CD8-positive, alpha-beta T cell (primary cell): ENCODE measurements at regions of chr11 and their contacts with region 1.

Region 1: DNA sequence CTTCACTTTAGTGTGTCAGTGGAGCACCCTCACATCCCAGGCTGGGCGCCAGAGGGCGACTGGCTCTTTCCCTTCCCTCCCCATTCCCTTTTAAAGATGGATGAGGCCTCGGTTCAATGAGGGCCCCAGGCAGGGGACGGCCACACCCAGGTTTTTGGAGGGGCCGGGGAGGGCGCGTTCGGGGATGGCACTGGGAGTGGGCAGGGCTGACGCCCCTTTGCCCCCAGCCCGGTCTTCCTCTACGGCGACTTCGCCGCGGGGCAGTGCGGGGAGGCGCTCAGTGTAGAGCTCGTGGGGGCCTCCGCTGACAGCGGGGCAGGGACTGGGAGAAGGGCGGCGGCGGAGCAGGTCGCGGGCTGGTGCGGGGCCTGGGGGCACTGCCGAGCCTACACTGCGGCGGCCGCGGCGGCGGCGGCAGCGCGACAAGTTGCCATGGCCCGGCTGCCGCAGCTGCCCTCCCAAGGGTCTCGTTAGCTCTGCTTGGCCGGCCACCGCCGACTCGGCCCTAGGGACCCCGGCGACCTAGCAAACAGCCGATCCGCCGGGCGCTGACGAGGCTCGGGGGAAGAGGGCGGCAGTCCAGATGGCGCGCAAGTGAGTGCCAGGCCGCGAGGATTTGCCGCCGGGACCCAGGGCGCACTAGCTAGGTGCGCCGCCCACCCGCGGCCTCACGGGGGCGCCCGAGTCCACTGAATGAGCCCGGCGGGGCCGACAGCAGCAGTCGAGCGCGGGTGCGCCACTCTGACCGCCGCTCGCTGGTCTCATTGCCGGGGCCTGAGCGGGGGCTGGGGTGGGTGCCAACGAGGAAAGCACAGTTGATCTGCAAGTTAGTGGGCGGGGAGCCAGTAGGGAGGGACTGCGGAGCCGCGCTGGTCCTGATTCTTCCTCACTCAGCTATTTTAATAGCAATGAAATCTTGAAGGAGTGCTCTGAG is 92.7 kb downstream of the RRM1 start:
- DNase-seq: peak; percentile 72 to 92 (median 82)
- ATAC-seq: peak; percentile 93
- H3K4me3 ChIP-seq: peak overlapping the region; percentile 39 to 50
- H3K4me3 Mint-ChIP-seq: peak overlapping the region; percentile 76
- H3K27ac ChIP-seq: no peak overlapping the region
- H3K27ac Mint-ChIP-seq: no peak overlapping the region
- H3K4me1 ChIP-seq: no peaks in the 10 kb centered on the region
- H3K4me1 Mint-ChIP-seq: peaks cover 4% of the 10 kb centered on the region
- H3K27me3 ChIP-seq: no peaks in the 10 kb centered on the region
- H3K27me3 Mint-ChIP-seq: peaks cover 8% of the 10 kb centered on the region
- CTCF ChIP-seq: peak; percentile 97

Region 2: DNA sequence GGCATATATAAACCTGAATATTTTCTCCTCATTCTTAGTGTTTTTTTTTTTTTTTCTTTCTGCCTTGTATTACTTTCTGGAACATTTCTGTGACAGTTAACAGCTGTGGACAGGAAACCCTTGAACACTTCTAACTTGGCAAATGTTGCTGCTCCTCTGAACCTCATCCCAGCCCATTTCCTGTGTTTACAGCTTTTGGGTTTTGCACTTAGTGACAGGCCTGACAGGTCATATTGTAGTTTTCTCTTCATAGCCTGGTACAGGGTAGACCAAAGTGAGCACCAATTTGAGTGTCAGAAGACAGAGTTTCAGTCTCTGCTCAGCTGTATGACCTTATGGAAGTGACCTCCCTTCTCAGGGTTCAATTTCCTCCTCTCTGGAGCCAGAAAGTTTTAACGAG is 240.3 kb before region 1 on chr11:
- CTCF ChIA-PET with region 1: no interaction called
- POLR2A ChIA-PET with region 1: no interaction called
- intact Hi-C with region 1: no loop called
- DNase-seq: peak; percentile 23 to 90 (median 62)
- ATAC-seq: peak; percentile 72
- H3K4me3 ChIP-seq: peak overlapping the region; percentile 32 to 35
- H3K4me3 Mint-ChIP-seq: peak overlapping the region; percentile 75
- H3K27ac ChIP-seq: peak overlapping the region; percentile 68 to 86
- H3K27ac Mint-ChIP-seq: peak overlapping the region; percentile 95
- H3K4me1 ChIP-seq: peaks cover 95% of the 10 kb centered on the region
- H3K4me1 Mint-ChIP-seq: peaks cover 95% of the 10 kb centered on the region
- H3K27me3 ChIP-seq: no peaks in the 10 kb centered on the region
- H3K27me3 Mint-ChIP-seq: no peaks in the 10 kb centered on the region
- CTCF ChIP-seq: no peak

Region 3: GRCh38 chr11:4490827-4491226 is 303.5 kb after region 1 on chr11:
- CTCF ChIA-PET with region 1: interaction called, 62 read pairs
- POLR2A ChIA-PET with region 1: no interaction called
- intact Hi-C with region 1: loop called (anchors 1 kb)
- DNase-seq: no peak
- ATAC-seq: no peak
- H3K4me3 ChIP-seq: no peak overlapping the region
- H3K4me3 Mint-ChIP-seq: no peak overlapping the region
- H3K27ac ChIP-seq: no peak overlapping the region
- H3K27ac Mint-ChIP-seq: no peak overlapping the region
- H3K4me1 ChIP-seq: no peaks in the 10 kb centered on the region
- H3K4me1 Mint-ChIP-seq: no peaks in the 10 kb centered on the region
- H3K27me3 ChIP-seq: no peaks in the 10 kb centered on the region
- H3K27me3 Mint-ChIP-seq: peaks cover 14% of the 10 kb centered on the region
- CTCF ChIP-seq: no peak

Region 4: DNA sequence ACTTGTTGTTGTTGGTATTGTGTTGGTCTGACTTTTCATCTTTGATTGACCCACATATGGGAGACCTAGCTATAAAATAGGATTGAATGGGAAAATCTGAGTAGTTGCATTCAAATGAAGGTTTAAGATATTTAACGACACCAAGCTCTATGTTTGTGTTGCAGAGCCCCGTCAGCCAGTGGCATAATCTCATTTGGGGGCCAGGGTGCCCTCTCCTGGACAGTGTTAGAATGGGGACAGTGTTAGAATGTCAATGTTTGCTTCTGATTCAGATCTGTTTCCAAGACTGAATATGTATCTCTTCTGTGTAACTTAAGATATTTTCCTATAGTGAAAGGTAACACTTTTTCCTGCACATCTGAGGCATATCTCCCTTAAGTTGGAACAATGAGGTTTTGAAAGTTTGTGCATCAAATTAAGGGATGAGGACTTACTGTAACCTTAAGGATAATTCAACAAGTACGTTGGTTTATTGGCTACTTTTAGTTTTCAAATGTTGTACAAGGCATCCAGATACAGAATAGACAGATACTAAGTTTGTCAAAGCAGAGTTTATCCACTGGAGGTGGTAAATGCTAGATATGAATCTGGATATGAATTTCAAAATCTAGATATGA is 352.4 kb after region 1 on chr11:
- CTCF ChIA-PET with region 1: interaction called, 68 read pairs
- POLR2A ChIA-PET with region 1: interaction called, 3 read pairs
- intact Hi-C with region 1: loop called (anchors 1 kb)
- DNase-seq: peak; percentile 2 to 59 (median 46)
- ATAC-seq: no peak
- H3K4me3 ChIP-seq: no peak overlapping the region
- H3K4me3 Mint-ChIP-seq: no peak overlapping the region
- H3K27ac ChIP-seq: no peak overlapping the region
- H3K27ac Mint-ChIP-seq: no peak overlapping the region
- H3K4me1 ChIP-seq: no peaks in the 10 kb centered on the region
- H3K4me1 Mint-ChIP-seq: no peaks in the 10 kb centered on the region
- H3K27me3 ChIP-seq: no peaks in the 10 kb centered on the region
- H3K27me3 Mint-ChIP-seq: peaks cover 4% of the 10 kb centered on the region
- CTCF ChIP-seq: peak; percentile 54

Region 5: DNA sequence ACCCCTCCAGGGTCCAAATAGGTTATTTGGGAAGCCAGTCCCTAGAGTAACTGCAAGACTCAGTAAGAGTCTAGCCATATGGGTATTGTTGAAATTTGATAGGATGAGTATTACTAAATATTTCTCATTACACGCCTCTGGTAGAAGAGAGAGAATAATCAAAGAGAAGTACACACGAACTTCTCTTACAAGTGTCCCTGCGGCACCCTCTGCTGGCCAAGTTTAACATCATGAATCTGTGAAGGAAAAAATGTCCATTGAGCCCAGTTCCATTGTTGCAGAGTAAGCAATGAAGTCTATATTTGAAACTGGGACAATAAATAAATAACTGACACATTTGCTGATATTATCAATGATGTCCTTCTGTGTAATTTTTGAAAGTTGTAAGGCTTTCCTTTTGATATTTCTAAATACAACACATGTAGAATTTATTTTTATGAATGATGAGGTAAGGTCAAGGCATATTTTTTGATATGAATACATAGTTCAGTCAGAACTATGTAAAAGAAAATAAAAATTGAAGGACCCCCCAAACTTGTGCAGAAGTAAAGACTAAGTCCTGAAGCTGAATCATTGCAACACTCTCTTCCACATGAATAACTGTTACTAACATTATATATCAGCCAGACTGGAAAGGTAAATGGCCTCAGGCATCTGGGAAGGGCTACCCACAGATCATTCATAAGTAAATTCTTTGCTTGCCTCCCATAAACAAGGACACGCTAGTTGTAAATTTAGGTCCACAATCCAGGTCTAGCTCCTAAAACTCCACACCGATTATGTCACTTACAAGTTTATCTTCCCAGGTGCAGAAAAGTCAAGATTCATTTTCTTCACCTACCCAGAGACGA is 817.3 kb after region 1 on chr11:
- CTCF ChIA-PET with region 1: no interaction called
- POLR2A ChIA-PET with region 1: no interaction called
- intact Hi-C with region 1: loop called in 1 of 2 experiments (anchors 2 kb)
- DNase-seq: peak in 2 of 9 experiments; percentile 10 to 20
- ATAC-seq: no peak
- H3K4me3 ChIP-seq: no peak overlapping the region
- H3K4me3 Mint-ChIP-seq: no peak overlapping the region
- H3K27ac ChIP-seq: no peak overlapping the region
- H3K27ac Mint-ChIP-seq: no peak overlapping the region
- H3K4me1 ChIP-seq: no peaks in the 10 kb centered on the region
- H3K4me1 Mint-ChIP-seq: no peaks in the 10 kb centered on the region
- H3K27me3 ChIP-seq: no peaks in the 10 kb centered on the region
- H3K27me3 Mint-ChIP-seq: no peaks in the 10 kb centered on the region
- CTCF ChIP-seq: no peak

Region 6: GRCh38 chr11:5188201-5188600 is 1000.9 kb after region 1 on chr11:
- CTCF ChIA-PET with region 1: no interaction called
- POLR2A ChIA-PET with region 1: no interaction called
- intact Hi-C with region 1: no loop called
- DNase-seq: no peak
- ATAC-seq: no peak
- H3K4me3 ChIP-seq: no peak overlapping the region
- H3K4me3 Mint-ChIP-seq: no peak overlapping the region
- H3K27ac ChIP-seq: no peak overlapping the region
- H3K27ac Mint-ChIP-seq: no peak overlapping the region
- H3K4me1 ChIP-seq: no peaks in the 10 kb centered on the region
- H3K4me1 Mint-ChIP-seq: no peaks in the 10 kb centered on the region
- H3K27me3 ChIP-seq: no peaks in the 10 kb centered on the region
- H3K27me3 Mint-ChIP-seq: no peaks in the 10 kb centered on the region
- CTCF ChIP-seq: no peak

Region 7: GRCh38 chr11:5808500-5809121 is 1621.3 kb after region 1 on chr11 and contains the start of gene OR52N2:
- CTCF ChIA-PET with region 1: no interaction called
- POLR2A ChIA-PET with region 1: no interaction called
- intact Hi-C with region 1: loop called in 1 of 2 experiments (anchors 5 kb)
- DNase-seq: peak; percentile 46 to 83 (median 73)
- ATAC-seq: peak; percentile 87
- H3K4me3 ChIP-seq: peak within 1 kb of the TSS; percentile 58 to 64
- H3K4me3 Mint-ChIP-seq: peak within 1 kb of the TSS; percentile 91
- H3K27ac ChIP-seq: no peak within 1 kb of the TSS
- H3K27ac Mint-ChIP-seq: no peak within 1 kb of the TSS
- H3K4me1 ChIP-seq: peaks cover 7% of the 10 kb centered on the region
- H3K4me1 Mint-ChIP-seq: peaks cover 13% of the 10 kb centered on the region
- H3K27me3 ChIP-seq: no peaks in the 10 kb centered on the region
- H3K27me3 Mint-ChIP-seq: peaks cover 14% of the 10 kb centered on the region
- CTCF ChIP-seq: peak; percentile 82
- total RNA-seq, gene OR52N2: not detected